CD4-positive, alpha-beta T cell (primary cell): ENCODE measurements at regions of chr15 and their contacts with region 1.

Region 1: GRCh38 chr15:20645956-20646355 is 104.4 kb upstream of the GOLGA6L6 start:
- DNase-seq: peak in 5 of 14 experiments; percentile 17 to 67 (median 54)
- ATAC-seq: peak; percentile 57
- H3K4me3 ChIP-seq: no peak overlapping the region
- H3K4me3 Mint-ChIP-seq: no peak overlapping the region
- H3K27ac ChIP-seq: no peak overlapping the region
- H3K27ac Mint-ChIP-seq: no peak overlapping the region
- H3K4me1 ChIP-seq: peaks cover 6% of the 10 kb centered on the region
- H3K4me1 Mint-ChIP-seq: no peaks in the 10 kb centered on the region
- H3K27me3 ChIP-seq: peaks cover 5 to 8% of the 10 kb centered on the region in 2 experiments
- H3K27me3 Mint-ChIP-seq: peaks cover 23% of the 10 kb centered on the region
- CTCF ChIP-seq: no peak

Region 2: DNA sequence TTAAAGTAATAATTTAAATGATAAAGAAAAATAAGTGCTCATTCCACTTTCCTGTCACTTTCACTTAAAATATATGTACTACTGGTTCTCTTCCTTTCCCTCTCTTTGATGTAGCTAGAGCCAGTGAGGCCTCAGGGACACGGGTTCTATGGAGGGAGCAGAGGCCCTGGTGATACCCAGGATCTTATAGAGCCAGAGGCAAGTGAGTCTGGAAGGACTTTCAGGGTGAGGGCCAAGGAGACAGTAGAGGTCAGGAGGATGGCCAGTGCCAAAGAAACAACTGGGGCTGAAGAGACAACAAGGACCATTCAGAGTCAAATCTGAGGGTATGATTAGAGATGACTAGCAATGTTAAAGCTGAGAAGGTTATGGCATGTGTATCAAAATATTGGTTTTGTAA is 19.7 kb after region 1 on chr15:
- CTCF ChIA-PET with region 1: no interaction called
- POLR2A ChIA-PET with region 1: no interaction called
- intact Hi-C with region 1: loop called in 1 of 2 experiments (anchors 1 kb)
- DNase-seq: no peak
- ATAC-seq: no peak
- H3K4me3 ChIP-seq: no peak overlapping the region
- H3K4me3 Mint-ChIP-seq: no peak overlapping the region
- H3K27ac ChIP-seq: no peak overlapping the region
- H3K27ac Mint-ChIP-seq: no peak overlapping the region
- H3K4me1 ChIP-seq: no peaks in the 10 kb centered on the region
- H3K4me1 Mint-ChIP-seq: no peaks in the 10 kb centered on the region
- H3K27me3 ChIP-seq: peaks cover 0 to 12% of the 10 kb centered on the region in 2 experiments
- H3K27me3 Mint-ChIP-seq: no peaks in the 10 kb centered on the region
- CTCF ChIP-seq: no peak